ENCODE measurements at regions of chr11 and their contacts with region 1.

Region 1: DNA sequence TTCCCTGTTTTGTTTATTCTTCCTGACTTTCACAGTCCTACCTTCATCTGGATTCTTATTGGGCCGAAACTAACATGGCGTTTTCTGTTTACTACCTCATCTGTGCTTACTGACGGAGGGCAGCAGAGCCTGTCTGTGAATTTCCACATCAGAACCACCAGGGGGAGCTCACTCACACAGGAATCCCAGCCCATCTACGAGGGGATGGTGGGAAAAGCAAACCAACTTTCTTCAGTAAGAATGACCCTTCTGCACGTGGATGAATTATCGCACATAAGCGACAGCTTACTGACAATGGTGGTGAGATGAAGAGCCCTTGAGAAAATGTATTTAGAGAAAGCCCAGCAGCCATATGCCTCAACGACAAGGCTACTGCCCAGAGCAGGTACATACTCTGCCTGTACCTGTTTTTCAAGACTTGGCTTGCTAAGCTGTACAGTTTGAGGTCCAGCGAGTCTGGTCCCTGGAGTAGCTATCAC is 42.5 kb downstream of the LARGE2 start:
- DNase-seq: peak; percentile 77
- CTCF ChIP-seq: peak; percentile 91

Region 2: GRCh38 chr11:45538363-45538762 is 426.6 kb before region 1 on chr11:
- CTCF ChIA-PET with region 1: no interaction called
- POLR2A ChIA-PET with region 1: no interaction called
- DNase-seq: no peak
- CTCF ChIP-seq: no peak

Region 3: DNA sequence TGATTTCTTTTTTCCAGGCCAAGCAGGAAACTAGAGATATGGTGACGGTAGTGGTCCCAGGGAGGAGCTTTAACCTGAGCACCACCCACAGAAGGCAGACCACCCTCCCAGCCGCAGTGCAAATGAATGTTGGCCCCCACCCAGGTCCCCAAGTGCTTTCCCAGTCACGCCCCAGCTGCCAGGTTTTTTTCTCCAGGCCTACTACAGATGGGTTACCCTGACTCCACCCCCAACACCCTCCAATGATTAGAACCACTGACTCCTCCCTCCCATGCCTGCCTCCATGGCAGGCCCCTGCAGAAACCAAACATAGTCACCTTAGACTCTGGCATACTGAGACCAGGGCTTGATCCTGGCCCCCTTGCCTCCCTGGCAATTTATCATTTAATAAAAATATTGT is 240.8 kb before region 1 on chr11:
- CTCF ChIA-PET with region 1: no interaction called
- POLR2A ChIA-PET with region 1: no interaction called
- DNase-seq: no peak
- CTCF ChIP-seq: no peak

Region 4: DNA sequence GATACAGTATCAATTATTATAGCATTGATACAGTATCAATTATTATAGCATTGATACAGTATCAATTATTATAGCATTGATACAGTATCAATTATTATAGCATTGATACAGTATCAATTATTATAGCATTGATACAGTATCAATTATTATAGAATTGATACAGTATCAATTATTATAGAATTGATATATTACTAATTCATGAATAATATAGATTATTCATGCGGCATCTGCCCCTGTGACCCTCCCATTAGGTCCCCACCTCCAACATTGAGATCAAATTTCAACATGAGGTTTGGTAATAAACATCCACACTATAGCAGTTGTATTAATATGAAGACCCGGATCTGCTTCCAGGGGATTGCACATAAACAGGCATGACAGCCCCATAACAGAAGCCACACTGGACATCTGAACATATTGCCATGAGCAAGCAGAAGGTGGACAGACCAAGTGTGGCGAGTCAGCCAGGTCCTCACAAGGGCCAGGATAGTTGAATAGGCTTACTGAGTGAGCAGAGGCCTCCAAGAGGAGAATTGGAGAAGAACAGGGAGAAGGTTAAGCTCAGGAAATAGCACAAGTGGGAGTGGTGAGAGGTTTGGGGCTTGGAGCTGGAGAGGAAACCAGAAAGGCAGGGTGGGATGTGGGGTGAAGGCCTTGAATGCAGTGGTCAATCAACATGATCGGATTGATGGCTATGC is 149.4 kb before region 1 on chr11:
- CTCF ChIA-PET with region 1: no interaction called
- POLR2A ChIA-PET with region 1: no interaction called
- DNase-seq: no peak
- CTCF ChIP-seq: no peak

Region 5: GRCh38 chr11:45872513-45873356 is 92.2 kb before region 1 on chr11:
- CTCF ChIA-PET with region 1: interaction called, 11 read pairs
- POLR2A ChIA-PET with region 1: no interaction called
- DNase-seq: peak; percentile 52
- CTCF ChIP-seq: peak; percentile 60

Region 6: DNA sequence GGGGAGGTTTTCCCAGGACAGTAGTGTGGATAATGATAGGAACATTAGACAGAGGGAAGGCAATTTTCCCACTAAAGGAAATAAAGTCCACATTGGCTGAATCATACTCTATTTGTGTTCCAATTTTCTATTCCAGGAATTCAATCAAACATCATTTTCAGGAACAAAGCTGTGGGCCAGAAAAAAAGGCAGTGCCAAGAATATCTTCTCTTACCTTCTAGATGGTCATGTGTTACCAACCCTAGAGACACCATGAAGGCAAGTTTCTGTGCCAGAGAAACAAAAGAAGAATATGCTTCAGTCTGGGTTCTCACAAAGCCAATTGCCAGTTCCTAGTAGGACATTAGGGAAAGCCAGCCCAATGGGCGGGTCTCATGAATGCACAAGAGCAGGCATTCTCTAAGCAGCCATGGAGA is 14.9 kb before region 1 on chr11:
- CTCF ChIA-PET with region 1: interaction called, 129 read pairs
- POLR2A ChIA-PET with region 1: no interaction called
- DNase-seq: no peak
- CTCF ChIP-seq: no peak

Region 7: DNA sequence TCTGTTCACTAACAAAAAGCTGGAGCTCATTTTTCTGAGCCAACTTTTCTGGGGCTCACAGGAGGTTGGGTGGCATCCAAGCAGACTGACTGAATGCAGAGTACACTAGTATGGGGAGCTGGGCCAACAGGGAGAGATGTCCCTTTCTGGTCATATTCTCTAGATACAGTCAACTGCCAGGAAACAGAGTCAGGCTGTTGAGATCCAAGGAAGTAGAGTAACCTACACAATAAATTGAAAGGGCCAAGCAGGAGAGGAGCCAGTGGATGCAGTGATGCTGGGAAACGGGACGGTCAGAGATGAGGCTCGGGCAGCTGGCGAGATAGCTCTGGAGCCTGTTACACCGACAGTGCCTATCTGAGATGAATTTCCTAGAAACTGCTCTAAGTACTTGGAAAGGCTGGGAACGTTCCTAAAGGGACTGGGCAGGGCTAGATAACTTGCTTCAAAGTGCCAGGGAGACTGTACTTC is 28.6 kb after region 1 on chr11:
- CTCF ChIA-PET with region 1: interaction called, 29 read pairs
- POLR2A ChIA-PET with region 1: no interaction called
- DNase-seq: no peak
- CTCF ChIP-seq: no peak

Region 8: DNA sequence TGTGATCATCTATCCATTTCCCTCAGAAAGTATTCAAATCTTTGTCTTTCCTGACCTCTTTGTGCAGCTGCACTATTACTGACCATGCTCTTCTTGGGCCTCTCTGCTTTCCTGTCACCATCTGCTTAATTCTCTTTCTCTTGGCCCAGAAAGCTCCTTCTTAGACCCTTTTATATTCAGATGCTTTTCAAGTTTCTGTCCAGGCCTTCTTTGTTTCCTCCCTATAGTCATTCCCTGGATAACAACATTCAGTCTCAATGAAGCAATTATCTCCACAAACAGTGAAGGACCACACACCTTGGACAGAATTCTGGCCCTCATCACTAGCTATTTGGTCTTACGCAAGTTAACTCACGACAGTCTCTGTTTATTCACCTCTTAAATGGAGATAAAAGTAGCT is 47.2 kb after region 1 on chr11:
- CTCF ChIA-PET with region 1: interaction called, 51 read pairs
- POLR2A ChIA-PET with region 1: no interaction called
- DNase-seq: no peak
- CTCF ChIP-seq: no peak

Region 9: GRCh38 chr11:46308631-46309419 is 343.9 kb after region 1 on chr11:
- CTCF ChIA-PET with region 1: interaction called, 22 read pairs
- POLR2A ChIA-PET with region 1: no interaction called
- DNase-seq: peak; percentile 83
- CTCF ChIP-seq: peak; percentile 89

Measured in GM10248 (cell line).